CD8-positive, alpha-beta T cell (primary cell): ENCODE measurements at regions of chr5 and their contacts with region 1.

Region 1: GRCh38 chr5:52799983-52800393 is 12.3 kb downstream of the ITGA1 start:
- DNase-seq: peak; percentile 87 to 97 (median 96)
- ATAC-seq: peak; percentile 87
- H3K4me3 ChIP-seq: peak overlapping the region; percentile 81 to 89
- H3K4me3 Mint-ChIP-seq: peak overlapping the region; percentile 97
- H3K27ac ChIP-seq: peak overlapping the region; percentile 70 to 72
- H3K27ac Mint-ChIP-seq: peak overlapping the region; percentile 96
- H3K4me1 ChIP-seq: peaks cover 33% of the 10 kb centered on the region
- H3K4me1 Mint-ChIP-seq: peaks cover 68% of the 10 kb centered on the region
- H3K27me3 ChIP-seq: no peaks in the 10 kb centered on the region
- H3K27me3 Mint-ChIP-seq: no peaks in the 10 kb centered on the region
- CTCF ChIP-seq: no peak

Region 2: DNA sequence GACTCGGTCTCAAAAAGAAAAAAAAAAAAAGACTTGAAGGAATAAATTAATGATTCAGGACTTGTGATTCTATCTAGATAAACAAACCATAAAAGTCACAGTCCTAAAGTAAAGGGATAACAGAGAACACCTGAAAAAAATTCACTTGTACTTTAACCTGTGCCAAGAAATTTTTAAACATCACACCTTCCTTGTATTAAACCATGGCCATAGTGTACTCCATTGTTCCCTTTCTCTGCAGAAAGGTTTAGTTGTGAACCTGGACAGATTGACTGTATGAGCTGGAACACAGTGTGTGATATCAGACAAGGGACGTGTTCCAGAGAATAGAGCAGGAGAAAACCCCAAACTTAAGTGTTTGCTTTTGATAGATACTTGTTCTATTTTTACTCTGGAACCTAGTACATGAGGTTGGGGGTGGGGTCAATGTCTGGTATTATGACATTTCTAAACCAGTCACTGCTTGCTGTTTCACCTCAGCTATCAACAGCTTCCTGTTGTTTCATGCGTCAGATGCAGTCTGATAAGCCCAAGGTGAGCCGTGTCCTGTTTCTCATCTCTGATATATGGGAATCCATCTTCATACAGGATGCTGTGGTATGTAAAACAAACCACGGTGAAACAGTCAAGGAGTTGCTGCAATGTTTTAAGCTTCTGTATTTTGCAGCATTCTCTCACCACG is 74.8 kb before region 1 on chr5:
- CTCF ChIA-PET with region 1: no interaction called
- POLR2A ChIA-PET with region 1: interaction called, 16 read pairs
- intact Hi-C with region 1: loop called in 1 of 2 experiments (anchors 2 kb)
- DNase-seq: peak; percentile 45 to 92 (median 67)
- ATAC-seq: peak; percentile 95
- H3K4me3 ChIP-seq: no peak overlapping the region
- H3K4me3 Mint-ChIP-seq: peak overlapping the region; percentile 68
- H3K27ac ChIP-seq: peak overlapping the region; percentile 44 to 67
- H3K27ac Mint-ChIP-seq: peak overlapping the region; percentile 95
- H3K4me1 ChIP-seq: peaks cover 35% of the 10 kb centered on the region
- H3K4me1 Mint-ChIP-seq: peaks cover 71% of the 10 kb centered on the region
- H3K27me3 ChIP-seq: no peaks in the 10 kb centered on the region
- H3K27me3 Mint-ChIP-seq: no peaks in the 10 kb centered on the region
- CTCF ChIP-seq: no peak

Region 3: GRCh38 chr5:52771343-52772039 is 28.5 kb before region 1 on chr5:
- CTCF ChIA-PET with region 1: interaction called, 3 read pairs
- POLR2A ChIA-PET with region 1: interaction called, 19 read pairs
- intact Hi-C with region 1: no loop called
- DNase-seq: peak in 5 of 9 experiments; percentile 6 to 57 (median 26)
- ATAC-seq: peak; percentile 45
- H3K4me3 ChIP-seq: no peak overlapping the region
- H3K4me3 Mint-ChIP-seq: peak overlapping the region; percentile 63
- H3K27ac ChIP-seq: no peak overlapping the region
- H3K27ac Mint-ChIP-seq: peak overlapping the region; percentile 87
- H3K4me1 ChIP-seq: peaks cover 24% of the 10 kb centered on the region
- H3K4me1 Mint-ChIP-seq: peaks cover 59% of the 10 kb centered on the region
- H3K27me3 ChIP-seq: no peaks in the 10 kb centered on the region
- H3K27me3 Mint-ChIP-seq: no peaks in the 10 kb centered on the region
- CTCF ChIP-seq: no peak

Region 4: DNA sequence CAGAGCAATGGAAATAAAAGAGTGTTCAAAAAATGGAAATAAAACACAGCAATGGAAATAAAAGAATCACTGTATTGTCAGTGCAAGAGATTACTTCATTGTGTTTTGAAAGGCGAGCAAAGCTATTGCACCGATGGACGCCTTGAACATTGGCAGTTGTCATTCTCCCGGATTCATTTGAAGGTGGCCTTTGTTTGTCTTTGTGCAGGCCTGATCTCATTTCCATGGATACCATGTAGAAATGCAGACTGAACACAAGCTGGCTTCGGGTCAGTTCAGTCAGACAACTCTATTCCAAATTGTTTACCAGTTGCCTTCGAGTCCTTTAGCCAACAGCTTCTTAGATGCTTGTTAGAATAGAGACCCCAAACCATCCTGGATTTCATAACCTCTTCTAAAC is 197.4 kb after region 1 on chr5:
- CTCF ChIA-PET with region 1: no interaction called
- POLR2A ChIA-PET with region 1: no interaction called
- intact Hi-C with region 1: no loop called
- DNase-seq: no peak
- ATAC-seq: no peak
- H3K4me3 ChIP-seq: no peak overlapping the region
- H3K4me3 Mint-ChIP-seq: no peak overlapping the region
- H3K27ac ChIP-seq: no peak overlapping the region
- H3K27ac Mint-ChIP-seq: no peak overlapping the region
- H3K4me1 ChIP-seq: no peaks in the 10 kb centered on the region
- H3K4me1 Mint-ChIP-seq: no peaks in the 10 kb centered on the region
- H3K27me3 ChIP-seq: no peaks in the 10 kb centered on the region
- H3K27me3 Mint-ChIP-seq: no peaks in the 10 kb centered on the region
- CTCF ChIP-seq: no peak

Region 5: DNA sequence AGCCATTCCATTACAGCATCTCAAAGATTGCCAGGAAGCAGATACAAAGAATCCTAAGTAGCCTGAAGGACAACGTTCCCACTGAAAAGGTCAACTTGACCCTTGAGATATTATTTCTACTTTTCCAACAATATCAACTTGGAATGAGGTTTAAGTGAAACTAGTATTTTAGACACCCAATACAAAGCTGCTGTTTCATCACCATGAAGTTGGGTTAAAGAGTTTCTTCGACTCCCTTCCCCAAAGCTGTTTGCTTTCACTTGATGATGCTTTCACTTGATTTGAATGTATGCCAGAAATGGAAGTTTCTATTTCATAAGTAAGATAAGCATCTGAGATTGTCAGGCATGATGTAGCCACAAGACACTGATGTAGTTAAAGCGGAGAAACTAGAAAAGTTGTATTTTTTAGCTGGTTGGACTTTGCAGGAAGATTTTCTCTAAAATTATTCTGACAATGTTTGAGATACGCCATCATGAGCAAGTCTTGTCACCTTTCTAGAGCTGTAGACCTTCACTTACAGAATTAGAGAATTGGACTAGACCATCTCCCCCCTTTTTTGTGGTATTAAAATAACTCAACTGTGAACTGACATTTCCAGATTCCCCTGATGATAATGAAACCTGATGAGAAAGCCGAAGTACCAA is 289.5 kb after region 1 on chr5:
- CTCF ChIA-PET with region 1: no interaction called
- POLR2A ChIA-PET with region 1: no interaction called
- intact Hi-C with region 1: loop called in 1 of 2 experiments (anchors 5 kb)
- DNase-seq: peak in 1 of 9 experiments; percentile 10
- ATAC-seq: peak; percentile 40
- H3K4me3 ChIP-seq: no peak overlapping the region
- H3K4me3 Mint-ChIP-seq: no peak overlapping the region
- H3K27ac ChIP-seq: no peak overlapping the region
- H3K27ac Mint-ChIP-seq: no peak overlapping the region
- H3K4me1 ChIP-seq: no peaks in the 10 kb centered on the region
- H3K4me1 Mint-ChIP-seq: peaks cover 15% of the 10 kb centered on the region
- H3K27me3 ChIP-seq: no peaks in the 10 kb centered on the region
- H3K27me3 Mint-ChIP-seq: no peaks in the 10 kb centered on the region
- CTCF ChIP-seq: no peak

Region 6: DNA sequence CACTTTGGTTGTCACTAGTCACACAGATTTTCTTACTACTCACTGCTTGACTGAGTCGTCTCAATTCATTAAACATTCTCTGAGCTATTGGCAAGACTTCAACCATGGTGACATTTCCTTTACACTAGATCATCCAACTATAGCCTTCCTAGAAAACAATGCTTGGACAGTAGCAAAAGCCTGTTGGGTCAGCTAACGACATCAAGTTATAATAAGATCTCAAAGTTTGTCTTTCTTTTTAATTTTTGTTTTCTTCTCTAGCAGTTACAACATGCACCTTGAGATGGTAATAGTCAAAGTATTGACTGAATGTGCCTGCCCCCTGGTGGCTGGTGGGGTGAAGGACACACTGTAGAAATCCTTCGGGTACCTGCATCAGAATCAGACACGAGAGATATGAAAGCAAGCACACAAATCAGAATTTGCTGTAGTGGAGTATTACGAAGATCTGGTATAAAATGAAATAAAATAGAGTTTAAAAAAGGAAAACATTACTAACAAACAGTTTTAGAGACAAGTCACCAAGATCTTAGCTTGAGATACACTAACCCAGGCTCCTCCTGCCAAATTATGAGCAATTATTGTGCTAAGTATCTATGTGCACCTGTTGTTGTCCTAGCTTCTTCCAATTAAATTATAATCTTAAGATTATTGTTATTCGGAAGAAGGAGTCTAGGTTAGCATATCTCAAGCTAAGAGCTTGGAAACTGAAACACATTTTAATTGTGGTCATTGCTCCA is 1429.2 kb after region 1 on chr5:
- CTCF ChIA-PET with region 1: no interaction called
- POLR2A ChIA-PET with region 1: no interaction called
- intact Hi-C with region 1: loop called in 1 of 2 experiments (anchors 2 kb)
- DNase-seq: peak; percentile 43 to 80 (median 68)
- ATAC-seq: peak; percentile 89
- H3K4me3 ChIP-seq: no peak overlapping the region
- H3K4me3 Mint-ChIP-seq: no peak overlapping the region
- H3K27ac ChIP-seq: no peak overlapping the region
- H3K27ac Mint-ChIP-seq: no peak overlapping the region
- H3K4me1 ChIP-seq: no peaks in the 10 kb centered on the region
- H3K4me1 Mint-ChIP-seq: peaks cover 8% of the 10 kb centered on the region
- H3K27me3 ChIP-seq: no peaks in the 10 kb centered on the region
- H3K27me3 Mint-ChIP-seq: no peaks in the 10 kb centered on the region
- CTCF ChIP-seq: peak; percentile 96